ENCODE measurements at regions of chr21 and their contacts with region 1.

Region 1: GRCh38 chr21:39518138-39518846 is 66.5 kb downstream of the SH3BGR start:
- DNase-seq: peak; percentile 4
- ATAC-seq: peak; percentile 94
- H3K4me3 ChIP-seq: no peak overlapping the region
- H3K27ac ChIP-seq: no peak overlapping the region
- H3K4me1 ChIP-seq: no peaks in the 10 kb centered on the region
- H3K27me3 ChIP-seq: no peaks in the 10 kb centered on the region
- CTCF ChIP-seq: peak; percentile 80 to 84 (median 82)
- EP300 ChIP-seq: no peak
- POLR2A ChIP-seq: no peak
- RAD21 ChIP-seq: peak; percentile 80

Region 2: DNA sequence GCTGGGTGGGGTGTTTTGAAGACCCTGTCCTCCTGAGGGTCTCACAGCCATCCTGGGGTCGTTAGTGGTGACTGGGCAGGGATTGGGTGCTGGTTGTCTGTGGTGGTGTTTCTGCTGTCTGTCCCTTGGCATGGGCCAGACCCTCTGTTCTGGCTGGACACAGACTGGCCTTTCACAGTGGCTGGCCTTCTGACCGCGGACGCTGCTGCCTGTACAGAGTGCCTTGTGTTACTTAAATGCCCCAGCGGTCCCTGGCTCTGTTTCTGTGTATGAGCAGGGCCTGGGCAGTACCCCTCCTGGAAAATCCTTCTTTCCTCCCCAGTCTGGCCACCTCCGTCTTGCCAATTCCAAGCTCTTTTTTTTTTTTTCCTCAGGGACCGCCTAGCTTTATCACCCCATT is 15.7 kb before region 1 on chr21:
- CTCF ChIA-PET with region 1: interaction called, 11 read pairs
- POLR2A ChIA-PET with region 1: no interaction called
- RAD21 ChIA-PET with region 1: no interaction called
- SMC1A ChIA-PET with region 1: no interaction called
- in situ Hi-C with region 1: no loop called
- intact Hi-C with region 1: no loop called
- DNase-seq: no peak
- ATAC-seq: no peak
- H3K4me3 ChIP-seq: no peak overlapping the region
- H3K27ac ChIP-seq: no peak overlapping the region
- H3K4me1 ChIP-seq: no peaks in the 10 kb centered on the region
- H3K27me3 ChIP-seq: no peaks in the 10 kb centered on the region
- CTCF ChIP-seq: no peak
- EP300 ChIP-seq: no peak
- POLR2A ChIP-seq: no peak
- RAD21 ChIP-seq: no peak

Region 3: GRCh38 chr21:39675993-39676661 is 157.8 kb after region 1 on chr21:
- CTCF ChIA-PET with region 1: no interaction called
- POLR2A ChIA-PET with region 1: no interaction called
- RAD21 ChIA-PET with region 1: no interaction called
- SMC1A ChIA-PET with region 1: no interaction called
- in situ Hi-C with region 1: no loop called
- intact Hi-C with region 1: no loop called
- DNase-seq: peak; percentile 51
- ATAC-seq: peak; percentile 83
- H3K4me3 ChIP-seq: no peak overlapping the region
- H3K27ac ChIP-seq: no peak overlapping the region
- H3K4me1 ChIP-seq: no peaks in the 10 kb centered on the region
- H3K27me3 ChIP-seq: no peaks in the 10 kb centered on the region
- CTCF ChIP-seq: no peak
- EP300 ChIP-seq: peak in 1 of 2 experiments; percentile 41; a peak in 1 of 4 replicates
- POLR2A ChIP-seq: no peak
- RAD21 ChIP-seq: no peak

Region 4: GRCh38 chr21:39715804-39716397 is 197.6 kb after region 1 on chr21:
- CTCF ChIA-PET with region 1: interaction called, 10 read pairs
- POLR2A ChIA-PET with region 1: no interaction called
- RAD21 ChIA-PET with region 1: no interaction called
- SMC1A ChIA-PET with region 1: interaction called, 3 read pairs
- in situ Hi-C with region 1: loop called (anchors 5 kb)
- intact Hi-C with region 1: loop called (anchors 1 kb)
- DNase-seq: no peak
- ATAC-seq: no peak
- H3K4me3 ChIP-seq: no peak overlapping the region
- H3K27ac ChIP-seq: no peak overlapping the region
- H3K4me1 ChIP-seq: no peaks in the 10 kb centered on the region
- H3K27me3 ChIP-seq: no peaks in the 10 kb centered on the region
- CTCF ChIP-seq: peak; percentile 27 to 40 (median 30); a peak in 5 of 6 replicates
- EP300 ChIP-seq: no peak
- POLR2A ChIP-seq: no peak
- RAD21 ChIP-seq: peak; percentile 38

Region 5: DNA sequence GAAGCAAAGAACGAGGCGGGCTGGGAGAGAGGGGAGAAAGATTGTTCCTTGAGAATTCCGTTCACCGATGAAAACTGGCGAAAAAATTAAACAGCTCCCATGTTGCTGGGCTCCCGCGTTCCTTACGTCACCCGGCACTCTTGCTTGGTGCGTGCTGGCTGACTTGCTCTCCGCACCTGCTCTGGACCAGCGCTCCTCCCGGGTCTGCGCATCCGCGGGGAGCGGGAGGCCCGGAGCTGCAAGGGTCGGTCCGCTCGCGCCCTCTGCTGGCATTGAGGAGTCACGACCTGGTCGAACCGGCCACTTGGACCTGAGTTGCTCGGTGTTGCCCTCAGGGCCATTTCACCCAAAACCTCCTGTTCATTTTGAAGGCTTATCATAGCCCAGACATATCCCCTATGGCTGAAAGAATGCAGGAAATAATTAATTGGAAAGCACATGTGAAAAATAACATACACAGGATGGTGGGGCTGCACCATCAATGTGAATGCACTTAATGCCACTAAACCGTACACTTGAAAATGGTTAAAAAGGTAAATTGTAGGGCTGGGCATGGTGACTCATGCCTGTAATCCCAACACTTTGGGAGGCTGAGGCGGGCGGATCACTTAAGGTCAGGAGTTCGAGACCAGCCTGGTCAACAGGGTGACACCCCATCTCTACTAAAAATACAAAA is 1550.8 kb after region 1 on chr21:
- CTCF ChIA-PET with region 1: no interaction called
- POLR2A ChIA-PET with region 1: no interaction called
- RAD21 ChIA-PET with region 1: interaction called, 3 read pairs
- SMC1A ChIA-PET with region 1: no interaction called
- in situ Hi-C with region 1: no loop called
- intact Hi-C with region 1: loop called (anchors 5 kb)
- DNase-seq: no peak
- ATAC-seq: peak; percentile 58
- H3K4me3 ChIP-seq: no peak overlapping the region
- H3K27ac ChIP-seq: no peak overlapping the region
- H3K4me1 ChIP-seq: no peaks in the 10 kb centered on the region
- H3K27me3 ChIP-seq: no peaks in the 10 kb centered on the region
- CTCF ChIP-seq: peak; percentile 65 to 72 (median 65); a peak in 5 of 6 replicates
- EP300 ChIP-seq: no peak
- POLR2A ChIP-seq: no peak
- RAD21 ChIP-seq: peak; percentile 56

Region 6: DNA sequence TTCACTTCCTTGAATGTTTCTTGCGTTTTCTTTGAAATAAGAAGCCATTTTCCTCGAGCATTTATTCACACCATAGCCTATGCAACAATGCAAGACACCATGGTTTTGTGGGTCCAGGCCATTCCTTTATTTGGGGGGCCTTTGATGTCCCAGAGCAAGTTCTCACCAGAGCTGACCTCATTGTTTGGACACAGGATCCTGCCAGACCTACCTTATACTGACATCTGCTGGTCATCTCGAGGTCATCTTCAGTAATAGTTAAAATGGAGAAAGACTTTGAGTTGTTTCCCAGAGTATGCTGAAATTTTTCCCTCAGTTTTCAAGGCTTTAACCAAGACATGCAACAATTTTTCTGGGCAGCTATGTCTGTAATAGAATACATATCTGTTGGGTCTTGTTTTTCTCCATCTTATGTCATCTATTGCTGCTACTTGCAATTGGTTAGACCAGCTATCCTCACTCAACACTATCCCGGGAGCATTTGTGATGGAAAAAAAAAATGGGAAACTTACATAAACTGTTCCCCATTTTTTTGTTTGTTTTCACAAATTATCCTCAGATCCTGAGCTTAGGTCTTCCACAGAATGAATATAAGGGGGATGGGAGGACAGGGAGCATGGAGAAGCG is 1615.7 kb after region 1 on chr21:
- CTCF ChIA-PET with region 1: interaction called, 6 read pairs
- POLR2A ChIA-PET with region 1: no interaction called
- RAD21 ChIA-PET with region 1: interaction called, 6 read pairs
- SMC1A ChIA-PET with region 1: no interaction called
- in situ Hi-C with region 1: loop called (anchors 10 kb)
- intact Hi-C with region 1: loop called (anchors 5 kb)
- DNase-seq: no peak
- ATAC-seq: peak; percentile 59; the same call in 2 of the 3 replicates
- H3K4me3 ChIP-seq: no peak overlapping the region
- H3K27ac ChIP-seq: no peak overlapping the region
- H3K4me1 ChIP-seq: no peaks in the 10 kb centered on the region
- H3K27me3 ChIP-seq: no peaks in the 10 kb centered on the region
- CTCF ChIP-seq: peak; percentile 40 to 58 (median 53); a peak in 5 of 6 replicates
- EP300 ChIP-seq: no peak
- POLR2A ChIP-seq: no peak
- RAD21 ChIP-seq: peak; percentile 36; the same call in 1 of the 2 replicates

Measured in GM12878 (cell line).